ENCODE measurements at regions of chr22 and their contacts with region 1.

Region 1: DNA sequence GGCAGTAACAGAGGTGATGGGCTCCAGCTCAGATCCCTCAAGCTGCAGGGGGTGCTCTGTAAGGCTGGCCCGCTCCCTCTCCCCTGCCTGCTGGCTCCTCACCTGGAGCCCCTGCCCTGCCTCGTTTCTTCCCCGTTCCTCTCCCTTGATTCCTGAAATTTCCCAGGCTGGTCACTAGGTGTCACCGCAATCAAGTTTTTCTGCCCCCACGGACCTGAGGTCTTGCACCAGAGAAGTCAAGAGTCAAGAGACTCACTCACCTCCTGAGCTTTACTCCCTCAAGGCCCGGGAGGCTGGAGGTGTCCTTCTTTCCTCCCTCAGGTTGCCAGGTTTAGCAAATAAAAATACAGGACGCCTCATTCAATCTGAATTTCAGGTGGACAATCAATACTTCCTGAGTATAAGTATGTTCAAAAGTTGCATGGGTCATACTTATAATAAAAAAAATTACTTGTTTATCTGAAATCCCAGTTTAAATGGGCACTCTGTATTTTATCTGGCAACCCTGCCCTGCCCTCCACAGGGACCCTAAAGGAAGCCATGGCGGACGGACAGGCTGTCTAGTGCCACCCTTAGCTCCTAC is 69.2 kb downstream of the SCUBE1 start:
- DNase-seq: peak; percentile 41 to 69
- H3K4me3 ChIP-seq: no peak overlapping the region
- H3K27ac ChIP-seq: no peak overlapping the region
- H3K4me1 ChIP-seq: peaks cover 3 to 20% (median 14%) of the 10 kb centered on the region in 4 experiments; a peak in 6 of 7 replicates
- H3K27me3 ChIP-seq: no peaks in the 10 kb centered on the region; a peak in 1 of 7 replicates
- CTCF ChIP-seq: peak; percentile 72 to 93 (median 86)
- EP300 ChIP-seq: no peak
- POLR2A ChIP-seq: no peak
- RAD21 ChIP-seq: peak; percentile 95 to 98

Region 2: GRCh38 chr22:43088979-43089717 is 184.8 kb before region 1 on chr22 and contains the start of gene TTLL1:
- CTCF ChIA-PET with region 1: no interaction called
- POLR2A ChIA-PET with region 1: no interaction called
- DNase-seq: peak; percentile 75 to 95
- H3K4me3 ChIP-seq: peak within 1 kb of the TSS; percentile 59 to 82 (median 65)
- H3K27ac ChIP-seq: no peak within 1 kb of the TSS; the same call in 1 of the 2 replicates
- H3K4me1 ChIP-seq: no peaks in the 10 kb centered on the region
- H3K27me3 ChIP-seq: no peaks in the 10 kb centered on the region
- CTCF ChIP-seq: no peak
- EP300 ChIP-seq: peak in 1 of 2 experiments; percentile 41; a peak in 1 of 3 replicates
- POLR2A ChIP-seq: peak in 1 of 2 experiments; percentile 62; a peak in 2 of 3 replicates
- RAD21 ChIP-seq: no peak; a peak in 1 of 4 replicates
- total RNA-seq, gene TTLL1: 4.1 and 5.0 TPM in 2 replicates

Region 3: GRCh38 chr22:43113526-43114251 is 160.3 kb before region 1 on chr22:
- CTCF ChIA-PET with region 1: no interaction called
- POLR2A ChIA-PET with region 1: no interaction called
- DNase-seq: no peak
- H3K4me3 ChIP-seq: no peak overlapping the region
- H3K27ac ChIP-seq: no peak overlapping the region
- H3K4me1 ChIP-seq: peaks cover 0 to 10% (median 5%) of the 10 kb centered on the region in 4 experiments
- H3K27me3 ChIP-seq: peaks cover 10 to 44% (median 39%) of the 10 kb centered on the region in 4 experiments
- CTCF ChIP-seq: no peak
- EP300 ChIP-seq: no peak
- POLR2A ChIP-seq: no peak
- RAD21 ChIP-seq: no peak

Region 4: GRCh38 chr22:43249789-43250471 is 24.1 kb before region 1 on chr22:
- CTCF ChIA-PET with region 1: interaction called, 388 read pairs
- POLR2A ChIA-PET with region 1: interaction called, 3 read pairs
- DNase-seq: no peak
- H3K4me3 ChIP-seq: no peak overlapping the region
- H3K27ac ChIP-seq: no peak overlapping the region
- H3K4me1 ChIP-seq: no peaks in the 10 kb centered on the region; a peak in 1 of 7 replicates
- H3K27me3 ChIP-seq: no peaks in the 10 kb centered on the region
- CTCF ChIP-seq: no peak
- EP300 ChIP-seq: no peak
- POLR2A ChIP-seq: no peak
- RAD21 ChIP-seq: no peak

Region 5: GRCh38 chr22:43293655-43294392 is 19.8 kb after region 1 on chr22:
- CTCF ChIA-PET with region 1: interaction called, 116 read pairs
- POLR2A ChIA-PET with region 1: no interaction called
- DNase-seq: no peak
- H3K4me3 ChIP-seq: no peak overlapping the region
- H3K27ac ChIP-seq: no peak overlapping the region
- H3K4me1 ChIP-seq: peaks cover 0 to 4% (median under 1%) of the 10 kb centered on the region in 4 experiments; a peak in 4 of 7 replicates
- H3K27me3 ChIP-seq: no peaks in the 10 kb centered on the region
- CTCF ChIP-seq: no peak
- EP300 ChIP-seq: no peak
- POLR2A ChIP-seq: no peak
- RAD21 ChIP-seq: no peak

Region 6: GRCh38 chr22:43313244-43313889 is 39.4 kb after region 1 on chr22:
- CTCF ChIA-PET with region 1: interaction called, 27 read pairs
- POLR2A ChIA-PET with region 1: no interaction called
- DNase-seq: no peak
- H3K4me3 ChIP-seq: no peak overlapping the region
- H3K27ac ChIP-seq: no peak overlapping the region
- H3K4me1 ChIP-seq: peaks cover 0 to 4% (median 0%) of the 10 kb centered on the region in 4 experiments; a peak in 3 of 7 replicates
- H3K27me3 ChIP-seq: no peaks in the 10 kb centered on the region; a peak in 1 of 7 replicates
- CTCF ChIP-seq: no peak
- EP300 ChIP-seq: no peak
- POLR2A ChIP-seq: no peak
- RAD21 ChIP-seq: no peak

Region 7: DNA sequence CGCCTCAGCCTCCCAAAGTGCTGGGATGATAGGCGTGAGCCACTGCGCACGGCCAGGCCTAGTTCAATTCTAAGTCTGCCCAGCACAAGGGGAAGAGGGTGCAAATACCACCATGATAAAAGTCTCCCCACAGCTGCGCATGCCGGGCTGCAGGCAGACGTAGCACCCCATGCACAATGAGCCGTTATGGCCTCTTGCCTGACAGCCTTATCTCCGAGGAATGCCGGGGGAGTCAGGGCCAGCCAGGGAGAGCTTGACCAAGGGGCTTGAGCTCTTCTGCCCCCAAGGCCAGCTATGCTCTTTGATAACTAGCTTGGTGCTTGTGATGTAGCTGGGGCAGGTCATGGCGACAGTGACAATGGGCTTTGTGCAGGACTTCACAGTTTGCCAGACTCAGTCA is 82.9 kb after region 1 on chr22:
- CTCF ChIA-PET with region 1: interaction called, 26 read pairs
- POLR2A ChIA-PET with region 1: no interaction called
- DNase-seq: no peak
- H3K4me3 ChIP-seq: no peak overlapping the region
- H3K27ac ChIP-seq: no peak overlapping the region; the same call in 1 of the 2 replicates
- H3K4me1 ChIP-seq: no peaks in the 10 kb centered on the region; a peak in 1 of 7 replicates
- H3K27me3 ChIP-seq: no peaks in the 10 kb centered on the region
- CTCF ChIP-seq: no peak
- EP300 ChIP-seq: no peak
- POLR2A ChIP-seq: no peak
- RAD21 ChIP-seq: no peak

Region 8: GRCh38 chr22:43377896-43378704 is 104.1 kb after region 1 on chr22:
- CTCF ChIA-PET with region 1: interaction called, 257 read pairs
- POLR2A ChIA-PET with region 1: no interaction called
- DNase-seq: no peak
- H3K4me3 ChIP-seq: no peak overlapping the region
- H3K27ac ChIP-seq: no peak overlapping the region
- H3K4me1 ChIP-seq: no peaks in the 10 kb centered on the region
- H3K27me3 ChIP-seq: no peaks in the 10 kb centered on the region
- CTCF ChIP-seq: no peak
- EP300 ChIP-seq: no peak
- POLR2A ChIP-seq: no peak
- RAD21 ChIP-seq: no peak